BJ (cell line): ENCODE measurements at regions of chr1 and their contacts with region 1.

Region 1: GRCh38 chr1:98260839-98261238 is 340.0 kb upstream of the DPYD start:
- DNase-seq: no peak
- H3K4me3 ChIP-seq: no peak overlapping the region
- H3K27me3 ChIP-seq: no peaks in the 10 kb centered on the region
- CTCF ChIP-seq: no peak

Region 2: GRCh38 chr1:98221923-98222322 is 38.9 kb before region 1 on chr1:
- CTCF ChIA-PET with region 1: no interaction called
- POLR2A ChIA-PET with region 1: interaction called, 11 read pairs
- DNase-seq: no peak
- H3K4me3 ChIP-seq: no peak overlapping the region
- H3K27me3 ChIP-seq: no peaks in the 10 kb centered on the region
- CTCF ChIP-seq: no peak

Region 3: DNA sequence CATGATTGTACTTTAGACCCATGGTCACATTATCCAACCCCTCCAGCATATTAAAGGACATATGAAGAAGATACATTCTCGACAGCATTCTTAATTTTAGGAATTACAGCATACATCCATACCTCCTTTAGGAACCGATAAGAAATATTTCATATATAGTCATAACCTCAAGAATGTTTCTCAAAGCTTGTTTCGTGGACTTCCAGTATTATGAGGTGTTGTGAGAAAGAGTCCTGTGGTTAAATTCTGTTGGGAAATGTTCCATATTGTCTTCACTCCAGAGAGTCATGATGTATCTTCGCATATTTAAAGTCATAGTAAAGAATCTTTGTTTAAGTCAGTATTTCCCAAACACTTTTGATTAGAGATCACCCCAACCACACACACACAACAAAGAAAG is 79.7 kb after region 1 on chr1:
- CTCF ChIA-PET with region 1: no interaction called
- POLR2A ChIA-PET with region 1: no interaction called
- DNase-seq: no peak
- H3K4me3 ChIP-seq: no peak overlapping the region
- H3K27me3 ChIP-seq: no peaks in the 10 kb centered on the region
- CTCF ChIP-seq: no peak